MCF 10A (cell line): ENCODE measurements at regions of chr1 and their contacts with region 1.

Region 1: GRCh38 chr1:223180731-223181321 is 37.8 kb upstream of the TLR5 start:
- DNase-seq: peak; percentile 92
- H3K4me3 Mint-ChIP-seq: no peak overlapping the region
- H3K27ac Mint-ChIP-seq: peak overlapping the region; percentile 9
- H3K4me1 Mint-ChIP-seq: peaks cover 33% of the 10 kb centered on the region
- H3K27me3 Mint-ChIP-seq: no peaks in the 10 kb centered on the region
- CTCF ChIP-seq: no peak

Region 2: GRCh38 chr1:222931023-222931422 is 249.8 kb before region 1 on chr1:
- CTCF ChIA-PET with region 1: no interaction called
- POLR2A ChIA-PET with region 1: no interaction called
- intact Hi-C with region 1: no loop called
- DNase-seq: no peak
- H3K4me3 Mint-ChIP-seq: no peak overlapping the region
- H3K27ac Mint-ChIP-seq: no peak overlapping the region
- H3K4me1 Mint-ChIP-seq: no peaks in the 10 kb centered on the region
- H3K27me3 Mint-ChIP-seq: no peaks in the 10 kb centered on the region
- CTCF ChIP-seq: no peak

Region 3: DNA sequence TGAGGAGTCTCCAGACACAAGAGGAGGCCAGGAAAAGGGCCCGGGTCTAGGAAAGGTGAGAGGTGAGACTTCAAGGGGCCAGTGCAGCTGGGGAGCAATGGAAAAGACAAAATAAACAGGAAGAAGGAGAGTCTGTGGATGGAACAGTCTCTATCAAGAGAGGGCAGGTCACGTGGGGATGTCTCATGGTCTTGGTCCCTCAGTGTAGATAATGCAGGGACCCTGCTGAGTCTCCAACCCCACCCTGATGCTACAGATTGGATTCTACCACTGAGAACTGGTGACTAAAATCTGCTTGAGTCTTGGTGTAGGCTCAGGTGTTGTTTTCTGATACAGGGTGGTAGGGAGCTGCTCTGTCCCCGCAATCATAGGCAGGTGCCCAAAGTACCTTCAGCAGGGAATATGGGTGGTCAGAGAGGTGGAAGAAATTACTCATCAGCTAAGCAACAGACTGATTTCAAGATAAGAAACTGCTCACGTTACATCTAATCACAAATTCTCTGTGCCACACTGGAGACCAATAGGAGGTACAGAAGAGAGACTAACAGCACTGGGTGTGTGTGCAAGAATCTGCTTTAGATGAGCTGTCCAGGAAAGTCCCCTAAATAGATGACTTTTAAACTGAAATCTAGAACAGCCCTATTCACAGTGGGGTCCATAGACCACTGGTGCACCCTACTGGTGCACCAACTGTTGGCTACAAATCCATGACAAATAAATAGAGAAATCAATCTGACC is 63.7 kb after region 1 on chr1:
- CTCF ChIA-PET with region 1: no interaction called
- POLR2A ChIA-PET with region 1: interaction called, 19 read pairs
- intact Hi-C with region 1: no loop called
- DNase-seq: peak; percentile 36
- H3K4me3 Mint-ChIP-seq: no peak overlapping the region
- H3K27ac Mint-ChIP-seq: no peak overlapping the region
- H3K4me1 Mint-ChIP-seq: peaks cover 7% of the 10 kb centered on the region
- H3K27me3 Mint-ChIP-seq: no peaks in the 10 kb centered on the region
- CTCF ChIP-seq: no peak

Region 4: DNA sequence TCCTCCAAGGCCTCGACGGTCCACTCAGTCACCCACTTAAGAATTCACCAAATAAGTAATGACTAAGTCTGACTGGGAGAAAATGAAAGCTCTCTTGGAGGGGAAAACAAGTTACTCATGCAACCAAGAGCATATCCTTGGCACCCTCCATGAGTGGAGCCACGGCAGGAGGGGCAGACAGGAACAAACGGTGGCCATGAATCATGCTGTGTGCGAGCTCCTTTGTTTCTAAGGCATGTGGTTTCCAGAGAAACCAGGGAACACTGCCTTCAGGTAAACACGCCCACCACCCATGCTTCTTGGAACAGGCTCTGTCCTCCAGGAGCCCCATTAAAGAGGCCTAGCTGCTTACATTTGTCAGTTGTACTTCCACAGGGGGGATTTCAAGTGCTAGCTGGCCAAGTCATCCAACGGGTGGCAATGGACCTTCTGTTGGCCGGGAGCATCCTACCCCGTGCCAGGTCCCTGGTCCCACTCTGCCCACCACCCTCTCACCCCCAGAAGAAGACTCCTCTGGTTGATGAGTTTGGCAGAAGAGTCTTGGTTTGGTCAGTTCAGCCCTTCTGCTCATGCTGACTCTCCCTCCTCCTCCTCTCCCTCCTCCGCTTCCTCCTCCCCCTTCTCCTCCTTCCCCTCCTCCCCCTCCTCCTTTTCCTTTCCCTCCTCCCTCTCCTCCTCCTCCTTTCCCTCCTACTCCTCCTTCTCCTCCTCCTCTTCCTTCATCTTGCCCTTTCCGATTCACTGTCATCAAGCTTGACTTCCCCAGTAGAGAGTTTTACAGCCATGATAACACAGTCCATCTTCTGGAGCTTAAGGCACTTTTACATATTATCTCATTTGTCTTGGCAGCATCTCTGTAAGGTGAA is 320.0 kb after region 1 on chr1:
- CTCF ChIA-PET with region 1: no interaction called
- POLR2A ChIA-PET with region 1: no interaction called
- intact Hi-C with region 1: loop called (anchors 1 kb)
- DNase-seq: peak; percentile 100
- H3K4me3 Mint-ChIP-seq: no peak overlapping the region
- H3K27ac Mint-ChIP-seq: peak overlapping the region; percentile 78
- H3K4me1 Mint-ChIP-seq: peaks cover 30% of the 10 kb centered on the region
- H3K27me3 Mint-ChIP-seq: no peaks in the 10 kb centered on the region
- CTCF ChIP-seq: no peak